Activated B cell treated with CpG ODN at 0.5 μM for 24 hours (primary cell): ENCODE measurements at regions of chr14 and their contacts with region 1.

Region 1: GRCh38 chr14:51939727-51940390 is 49.5 kb upstream of the RTRAF start:
- DNase-seq: no peak
- ATAC-seq: peak; percentile 85
- H3K4me3 Mint-ChIP-seq: peak overlapping the region; percentile 54
- H3K27ac Mint-ChIP-seq: peak overlapping the region; percentile 85
- H3K4me1 Mint-ChIP-seq: peaks cover 31% of the 10 kb centered on the region
- H3K27me3 Mint-ChIP-seq: no peaks in the 10 kb centered on the region
- CTCF ChIP-seq: no peak

Region 2: DNA sequence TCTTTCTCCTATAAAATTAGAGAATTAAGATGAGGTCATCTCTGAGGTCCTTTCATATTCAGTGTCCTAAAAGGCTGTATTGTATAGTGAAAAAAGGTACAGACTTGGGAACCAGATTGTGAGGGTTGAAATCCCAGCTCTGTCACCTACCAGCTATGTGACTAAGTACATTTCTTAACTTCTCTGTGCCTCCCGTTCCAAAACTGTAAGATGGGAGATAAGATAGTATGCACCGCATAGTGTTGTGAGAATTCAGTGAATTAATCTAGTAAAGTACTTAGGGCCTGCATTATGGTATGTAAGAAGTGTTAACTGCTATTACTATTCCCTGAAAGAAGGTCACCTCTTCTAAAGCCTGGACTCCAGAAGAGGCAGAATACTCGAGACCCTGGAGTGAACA is 18.8 kb before region 1 on chr14:
- CTCF ChIA-PET with region 1: no interaction called
- POLR2A ChIA-PET with region 1: no interaction called
- intact Hi-C with region 1: loop called (anchors 2 kb)
- DNase-seq: no peak
- ATAC-seq: no peak
- H3K4me3 Mint-ChIP-seq: no peak overlapping the region
- H3K27ac Mint-ChIP-seq: no peak overlapping the region
- H3K4me1 Mint-ChIP-seq: peaks cover 40% of the 10 kb centered on the region
- H3K27me3 Mint-ChIP-seq: no peaks in the 10 kb centered on the region
- CTCF ChIP-seq: no peak